Prostate gland (tissue), 2 donors: ENCODE measurements at regions of chr20 and their contacts with region 1.

Region 1: DNA sequence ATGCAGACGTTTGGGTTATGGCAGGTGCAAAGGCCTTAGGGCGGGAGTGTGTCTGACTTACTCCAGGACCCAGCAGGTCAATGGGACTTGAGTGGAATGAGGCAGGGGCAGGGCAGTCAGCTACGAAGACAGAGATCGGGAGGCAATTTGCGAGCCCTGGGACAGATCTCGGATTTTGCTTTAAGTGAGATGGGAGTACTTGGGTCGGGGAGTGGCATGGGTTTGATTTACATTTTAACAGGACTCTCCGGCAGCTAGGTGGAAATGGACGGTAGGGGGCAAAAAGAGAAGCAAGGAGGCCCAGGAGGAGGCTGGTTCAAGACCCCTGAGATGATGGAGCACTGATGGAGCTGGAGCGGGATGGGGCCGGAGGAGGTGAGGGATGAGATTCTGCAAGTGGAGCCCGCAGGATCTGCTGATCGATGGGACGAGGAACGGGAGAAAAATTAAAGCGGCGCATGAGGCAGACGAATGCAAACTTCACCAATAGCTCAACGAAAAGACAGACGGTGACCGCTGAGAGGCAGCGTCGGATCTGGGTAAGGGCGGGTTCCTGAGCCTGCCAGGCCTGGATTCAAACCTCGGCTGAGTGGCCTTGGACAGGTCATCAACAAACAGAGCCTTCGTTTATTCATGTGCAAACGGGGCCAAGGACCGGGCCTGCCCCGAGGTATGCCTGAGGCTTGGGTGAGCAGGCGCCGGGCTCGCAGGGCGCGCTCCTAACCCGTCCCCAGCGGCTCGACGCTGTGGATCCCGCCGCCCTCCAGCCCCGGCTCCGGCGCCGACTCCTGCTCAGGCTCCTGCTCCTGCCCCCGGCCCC is 756 bp upstream of the RBCK1 start:
- DNase-seq: peak; percentile 61
- H3K4me3 ChIP-seq: peak overlapping the region; percentile 88 to 99
- H3K27ac ChIP-seq: peak overlapping the region; percentile 95 to 97
- H3K4me1 ChIP-seq: peaks cover 11% of the 10 kb centered on the region
- H3K27me3 ChIP-seq: no peaks in the 10 kb centered on the region
- CTCF ChIP-seq: peak in 1 of 4 experiments; percentile 20
- POLR2A ChIP-seq: peak; percentile 35

Region 2: DNA sequence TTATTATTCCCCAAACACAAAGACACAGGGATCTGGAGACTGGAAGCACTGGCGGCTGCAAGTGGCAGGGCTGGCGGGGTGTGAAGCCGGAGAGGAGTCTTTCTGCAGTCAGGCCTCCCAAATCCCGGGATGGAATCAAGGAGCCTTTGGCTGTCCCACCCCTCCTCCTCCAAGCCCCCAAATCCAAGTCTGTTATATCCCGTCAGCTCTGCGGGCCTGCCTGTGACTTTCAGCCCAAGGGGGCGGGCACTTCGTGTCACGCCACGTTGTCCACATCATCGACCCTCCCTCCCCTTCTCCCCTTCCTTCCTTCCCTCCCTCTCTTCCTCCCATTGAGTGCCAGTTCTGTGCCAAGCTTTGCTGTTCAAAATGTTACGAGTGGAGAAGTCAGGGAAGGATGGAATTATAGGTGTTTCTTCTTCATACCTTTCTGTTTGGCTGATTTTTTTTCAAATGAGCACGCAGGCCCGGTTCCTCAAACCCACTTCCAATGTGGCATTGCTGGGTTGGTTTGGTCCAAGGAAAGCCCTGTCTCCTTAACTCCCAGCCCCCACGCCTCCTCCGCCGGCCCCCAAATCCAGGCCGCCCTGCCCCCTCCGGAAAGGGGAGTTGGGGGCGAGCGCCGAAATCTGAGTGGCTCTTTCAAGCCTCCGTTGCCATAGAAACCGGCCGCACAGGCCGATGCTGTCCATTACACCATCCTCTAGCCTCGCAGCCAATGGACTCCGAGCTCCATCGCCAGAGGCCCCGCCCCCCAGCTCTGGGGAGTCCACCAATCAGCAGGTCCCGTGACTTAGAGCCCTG is 97.3 kb before region 1 on chr20:
- intact Hi-C with region 1: no loop called
- DNase-seq: peak; percentile 85
- H3K4me3 ChIP-seq: peak overlapping the region; percentile 19 to 29
- H3K27ac ChIP-seq: peak overlapping the region; percentile 68 to 76
- H3K4me1 ChIP-seq: no peaks in the 10 kb centered on the region
- H3K27me3 ChIP-seq: no peaks in the 10 kb centered on the region
- CTCF ChIP-seq: no peak
- POLR2A ChIP-seq: no peak

Region 3: GRCh38 chr20:462199-462991 is 55.1 kb after region 1 on chr20 and contains the start of gene TBC1D20:
- intact Hi-C with region 1: loop called (anchors 5 kb)
- DNase-seq: peak; percentile 83
- H3K4me3 ChIP-seq: peak within 1 kb of the TSS; percentile 70 to 92
- H3K27ac ChIP-seq: peak within 1 kb of the TSS; percentile 83 to 97
- H3K4me1 ChIP-seq: no peaks in the 10 kb centered on the region
- H3K27me3 ChIP-seq: no peaks in the 10 kb centered on the region
- CTCF ChIP-seq: peak in 3 of 4 experiments; percentile 19 to 29 (median 24)
- POLR2A ChIP-seq: peak; percentile 66
- total RNA-seq, gene TBC1D20: 38.0 to 53.1 TPM

Region 4: GRCh38 chr20:543369-544152 is 136.2 kb after region 1 on chr20 and contains the start of gene CSNK2A1:
- intact Hi-C with region 1: loop called (anchors 5 kb)
- DNase-seq: peak; percentile 92
- H3K4me3 ChIP-seq: peak within 1 kb of the TSS; percentile 91 to 97
- H3K27ac ChIP-seq: peak within 1 kb of the TSS; percentile 92 to 93
- H3K4me1 ChIP-seq: peaks cover 6% of the 10 kb centered on the region
- H3K27me3 ChIP-seq: no peaks in the 10 kb centered on the region
- CTCF ChIP-seq: peak in 2 of 4 experiments; percentile 9 to 16
- POLR2A ChIP-seq: peak; percentile 94
- total RNA-seq, gene CSNK2A1: 66.9 to 152 TPM